GM12878 (cell line): ENCODE measurements at regions of chrX and their contacts with region 1.

Region 1: DNA sequence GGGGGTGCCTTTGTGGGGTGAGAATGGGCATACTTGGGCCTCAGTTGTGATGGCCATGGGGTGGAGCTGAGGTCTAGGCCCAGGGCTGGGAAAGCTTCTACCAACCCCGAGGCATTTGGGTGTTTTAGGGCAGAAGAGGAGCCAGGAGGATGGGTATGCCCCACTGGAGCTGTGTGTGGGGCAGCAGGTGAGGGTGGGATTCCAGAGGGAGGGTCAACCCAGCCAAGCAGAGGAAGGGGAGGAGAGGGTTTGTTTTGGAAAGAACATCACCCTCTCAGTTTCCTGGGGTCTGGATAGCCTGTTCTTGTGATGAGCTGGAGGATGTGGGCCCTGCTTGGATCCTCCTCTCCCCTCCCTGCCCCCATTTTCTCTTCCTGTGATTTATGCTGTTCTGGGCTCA is 620 bp downstream of the IL9R start:
- DNase-seq: no peak
- ATAC-seq: no peak
- H3K4me3 ChIP-seq: no peak overlapping the region
- H3K27ac ChIP-seq: peak overlapping the region; percentile 18; the same call in 1 of the 2 replicates
- H3K4me1 ChIP-seq: no peaks in the 10 kb centered on the region; the same call in 1 of the 2 replicates
- H3K27me3 ChIP-seq: no peaks in the 10 kb centered on the region
- CTCF ChIP-seq: no peak
- EP300 ChIP-seq: no peak
- POLR2A ChIP-seq: no peak
- RAD21 ChIP-seq: no peak

Region 2: GRCh38 chrX:155951237-155951789 is 46.8 kb before region 1 on chrX:
- CTCF ChIA-PET with region 1: no interaction called
- POLR2A ChIA-PET with region 1: no interaction called
- RAD21 ChIA-PET with region 1: no interaction called
- SMC1A ChIA-PET with region 1: no interaction called
- in situ Hi-C with region 1: no loop called
- intact Hi-C with region 1: loop called (anchors 2 kb)
- DNase-seq: no peak
- ATAC-seq: no peak
- H3K4me3 ChIP-seq: no peak overlapping the region
- H3K27ac ChIP-seq: no peak overlapping the region
- H3K4me1 ChIP-seq: no peaks in the 10 kb centered on the region
- H3K27me3 ChIP-seq: no peaks in the 10 kb centered on the region
- CTCF ChIP-seq: no peak
- EP300 ChIP-seq: no peak
- POLR2A ChIP-seq: no peak
- RAD21 ChIP-seq: no peak

Region 3: DNA sequence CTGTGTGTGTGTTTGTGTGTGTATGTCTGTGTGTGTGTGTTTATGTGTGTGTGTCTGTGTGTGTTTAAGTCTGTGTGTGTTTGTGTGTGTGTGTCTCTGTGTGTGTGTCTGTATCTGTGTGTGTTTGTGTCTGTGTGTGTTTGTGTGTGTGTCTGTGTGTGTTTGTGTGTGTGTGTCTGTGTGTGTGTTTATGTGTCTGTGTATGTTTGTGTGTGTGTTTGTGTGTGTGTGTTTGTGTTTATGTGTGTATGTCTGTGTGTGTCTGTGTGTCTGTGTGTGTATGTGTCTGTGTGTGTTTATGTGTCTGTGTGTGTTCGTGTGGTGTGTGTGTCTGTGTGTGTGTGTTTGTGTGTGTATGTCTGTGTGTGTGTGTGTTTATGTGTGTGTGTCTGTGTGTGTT is 10.8 kb after region 1 on chrX:
- CTCF ChIA-PET with region 1: no interaction called
- POLR2A ChIA-PET with region 1: no interaction called
- RAD21 ChIA-PET with region 1: no interaction called
- SMC1A ChIA-PET with region 1: no interaction called
- in situ Hi-C with region 1: no loop called
- intact Hi-C with region 1: no loop called
- DNase-seq: no peak
- ATAC-seq: no peak
- H3K4me3 ChIP-seq: no peak overlapping the region
- H3K27ac ChIP-seq: no peak overlapping the region
- H3K4me1 ChIP-seq: no peaks in the 10 kb centered on the region
- H3K27me3 ChIP-seq: no peaks in the 10 kb centered on the region
- CTCF ChIP-seq: no peak
- EP300 ChIP-seq: no peak
- POLR2A ChIP-seq: no peak
- RAD21 ChIP-seq: no peak